ENCODE measurements at regions of chr10 and their contacts with region 1.

Region 1: DNA sequence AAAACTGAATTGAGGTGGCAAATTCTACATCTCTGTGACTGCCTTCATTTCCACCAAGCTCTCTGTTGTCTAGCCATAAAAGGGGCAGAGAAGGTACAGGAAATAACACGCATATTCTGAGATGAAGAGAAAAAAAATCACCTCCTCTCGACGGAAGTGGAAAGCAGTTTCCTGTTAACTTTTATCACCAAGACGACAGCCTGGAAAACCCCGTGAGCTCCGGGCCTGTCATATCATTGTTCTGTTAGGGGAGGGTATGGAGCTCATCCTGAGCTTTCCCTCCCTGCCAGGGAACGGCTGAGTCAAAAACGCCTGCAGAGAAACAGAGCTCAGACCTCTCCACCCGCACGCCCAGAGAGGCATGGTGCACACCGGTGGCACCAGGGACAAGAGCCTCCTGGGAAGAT is 200.3 kb downstream of the PRPF18 start:
- DNase-seq: peak; percentile 46 to 95 (median 66)
- ATAC-seq: peak; percentile 85
- H3K4me3 ChIP-seq: peak overlapping the region; percentile 32
- H3K4me3 Mint-ChIP-seq: peak overlapping the region; percentile 83
- H3K27ac ChIP-seq: peak overlapping the region; percentile 93 to 97
- H3K27ac Mint-ChIP-seq: no peak overlapping the region
- H3K4me1 ChIP-seq: peaks cover 67% of the 10 kb centered on the region
- H3K4me1 Mint-ChIP-seq: peaks cover 36% of the 10 kb centered on the region
- H3K27me3 ChIP-seq: no peaks in the 10 kb centered on the region
- H3K27me3 Mint-ChIP-seq: no peaks in the 10 kb centered on the region
- CTCF ChIP-seq: no peak

Region 2: GRCh38 chr10:13831711-13832141 is 44.7 kb after region 1 on chr10:
- CTCF ChIA-PET with region 1: no interaction called
- POLR2A ChIA-PET with region 1: no interaction called
- intact Hi-C with region 1: loop called in 1 of 2 experiments (anchors 5 kb)
- DNase-seq: peak in 1 of 14 experiments; percentile 11
- ATAC-seq: no peak
- H3K4me3 ChIP-seq: no peak overlapping the region
- H3K4me3 Mint-ChIP-seq: no peak overlapping the region
- H3K27ac ChIP-seq: no peak overlapping the region
- H3K27ac Mint-ChIP-seq: no peak overlapping the region
- H3K4me1 ChIP-seq: no peaks in the 10 kb centered on the region
- H3K4me1 Mint-ChIP-seq: peaks cover 9% of the 10 kb centered on the region
- H3K27me3 ChIP-seq: no peaks in the 10 kb centered on the region
- H3K27me3 Mint-ChIP-seq: no peaks in the 10 kb centered on the region
- CTCF ChIP-seq: no peak

Region 3: GRCh38 chr10:14093730-14094484 is 306.9 kb after region 1 on chr10:
- CTCF ChIA-PET with region 1: interaction called, 3 read pairs
- POLR2A ChIA-PET with region 1: interaction called, 5 read pairs
- intact Hi-C with region 1: loop called (anchors 1 to 2 kb)
- DNase-seq: peak in 4 of 14 experiments; percentile 8 to 25 (median 16)
- ATAC-seq: no peak
- H3K4me3 ChIP-seq: no peak overlapping the region
- H3K4me3 Mint-ChIP-seq: no peak overlapping the region
- H3K27ac ChIP-seq: no peak overlapping the region
- H3K27ac Mint-ChIP-seq: no peak overlapping the region
- H3K4me1 ChIP-seq: no peaks in the 10 kb centered on the region
- H3K4me1 Mint-ChIP-seq: peaks cover 5% of the 10 kb centered on the region
- H3K27me3 ChIP-seq: no peaks in the 10 kb centered on the region
- H3K27me3 Mint-ChIP-seq: no peaks in the 10 kb centered on the region
- CTCF ChIP-seq: peak; percentile 9

Region 4: GRCh38 chr10:14191871-14192270 is 404.9 kb after region 1 on chr10:
- CTCF ChIA-PET with region 1: interaction called, 7 read pairs
- POLR2A ChIA-PET with region 1: interaction called, 3 read pairs
- intact Hi-C with region 1: loop called in 1 of 2 experiments (anchors 5 kb)
- DNase-seq: no peak
- ATAC-seq: no peak
- H3K4me3 ChIP-seq: no peak overlapping the region
- H3K4me3 Mint-ChIP-seq: no peak overlapping the region
- H3K27ac ChIP-seq: no peak overlapping the region
- H3K27ac Mint-ChIP-seq: no peak overlapping the region
- H3K4me1 ChIP-seq: no peaks in the 10 kb centered on the region
- H3K4me1 Mint-ChIP-seq: no peaks in the 10 kb centered on the region
- H3K27me3 ChIP-seq: peaks cover 2 to 9% of the 10 kb centered on the region in 2 experiments
- H3K27me3 Mint-ChIP-seq: peaks cover 19% of the 10 kb centered on the region
- CTCF ChIP-seq: no peak

Region 5: GRCh38 chr10:14543046-14543903 is 756.3 kb after region 1 on chr10:
- CTCF ChIA-PET with region 1: no interaction called
- POLR2A ChIA-PET with region 1: interaction called, 6 read pairs
- intact Hi-C with region 1: loop called (anchors 10 kb)
- DNase-seq: peak in 6 of 14 experiments; percentile 36 to 80 (median 64)
- ATAC-seq: peak; percentile 79
- H3K4me3 ChIP-seq: peak overlapping the region; percentile 17
- H3K4me3 Mint-ChIP-seq: peak overlapping the region; percentile 76
- H3K27ac ChIP-seq: peak overlapping the region; percentile 57 to 66
- H3K27ac Mint-ChIP-seq: peak overlapping the region; percentile 98
- H3K4me1 ChIP-seq: peaks cover 64% of the 10 kb centered on the region
- H3K4me1 Mint-ChIP-seq: peaks cover 96% of the 10 kb centered on the region
- H3K27me3 ChIP-seq: no peaks in the 10 kb centered on the region
- H3K27me3 Mint-ChIP-seq: no peaks in the 10 kb centered on the region
- CTCF ChIP-seq: peak; percentile 41

Region 6: GRCh38 chr10:14822879-14823755 is 1036.1 kb after region 1 on chr10:
- CTCF ChIA-PET with region 1: no interaction called
- POLR2A ChIA-PET with region 1: no interaction called
- intact Hi-C with region 1: loop called in 1 of 2 experiments (anchors 5 kb)
- DNase-seq: peak in 13 of 14 experiments; percentile 15 to 67 (median 37)
- ATAC-seq: peak; percentile 56
- H3K4me3 ChIP-seq: no peak overlapping the region
- H3K4me3 Mint-ChIP-seq: no peak overlapping the region
- H3K27ac ChIP-seq: no peak overlapping the region
- H3K27ac Mint-ChIP-seq: no peak overlapping the region
- H3K4me1 ChIP-seq: no peaks in the 10 kb centered on the region
- H3K4me1 Mint-ChIP-seq: peaks cover 4% of the 10 kb centered on the region
- H3K27me3 ChIP-seq: no peaks in the 10 kb centered on the region
- H3K27me3 Mint-ChIP-seq: no peaks in the 10 kb centered on the region
- CTCF ChIP-seq: peak; percentile 76

Region 7: DNA sequence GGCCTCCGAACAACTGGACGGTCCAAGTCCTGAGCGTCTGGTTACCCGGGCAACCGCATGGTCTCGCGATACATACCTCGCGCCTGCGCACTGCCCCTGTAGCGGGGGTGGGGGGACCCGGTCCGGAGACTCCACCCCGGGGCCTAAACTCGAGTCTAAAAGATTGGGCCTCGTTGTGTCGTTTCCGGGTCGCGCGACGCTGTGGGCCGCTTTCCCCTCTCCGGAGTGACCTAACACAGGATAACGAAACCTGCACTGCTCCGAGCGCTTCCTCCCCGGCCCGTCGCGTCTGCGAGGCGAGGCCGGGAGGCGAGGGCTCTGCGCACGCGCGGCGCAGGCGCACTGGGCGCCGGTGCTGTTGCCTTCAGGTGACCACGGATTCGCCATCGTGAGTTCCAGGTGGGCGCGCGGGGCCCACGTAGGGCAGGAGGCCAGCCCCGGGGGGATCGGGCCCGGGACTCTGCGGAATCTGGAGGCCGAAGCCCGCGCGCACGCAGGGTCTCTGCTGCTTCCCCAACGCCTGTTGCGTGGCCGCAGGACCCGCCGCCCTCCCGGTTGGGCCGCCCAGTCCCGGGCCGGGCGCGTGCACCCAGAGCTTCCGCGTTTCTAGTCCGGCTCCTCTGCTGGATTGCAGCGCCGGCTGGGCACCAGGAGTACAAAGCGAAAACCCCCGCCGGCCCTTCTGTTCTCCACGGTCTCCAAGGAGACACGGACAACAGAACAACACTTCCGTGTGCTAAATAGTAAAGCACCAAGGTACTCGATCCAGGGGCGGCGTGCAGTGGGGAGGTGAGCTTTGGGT is 1310.2 kb after region 1 on chr10 and contains the start of gene RPP38:
- CTCF ChIA-PET with region 1: no interaction called
- POLR2A ChIA-PET with region 1: no interaction called
- intact Hi-C with region 1: loop called in 1 of 2 experiments (anchors 10 kb)
- DNase-seq: peak; percentile 89 to 97 (median 92)
- ATAC-seq: peak; percentile 80
- H3K4me3 ChIP-seq: peak within 1 kb of the TSS; percentile 80
- H3K4me3 Mint-ChIP-seq: peak within 1 kb of the TSS; percentile 95
- H3K27ac ChIP-seq: peak within 1 kb of the TSS; percentile 89 to 95
- H3K27ac Mint-ChIP-seq: peak within 1 kb of the TSS; percentile 97
- H3K4me1 ChIP-seq: peaks cover 43% of the 10 kb centered on the region
- H3K4me1 Mint-ChIP-seq: peaks cover 38% of the 10 kb centered on the region
- H3K27me3 ChIP-seq: no peaks in the 10 kb centered on the region
- H3K27me3 Mint-ChIP-seq: no peaks in the 10 kb centered on the region
- CTCF ChIP-seq: no peak
- total RNA-seq, gene RPP38: 12.9 to 14.9 TPM

Measured in CD4-positive, alpha-beta T cell (primary cell).